CD8-positive, alpha-beta memory T cell (primary cell): ENCODE measurements at regions of chr4 and their contacts with region 1.

Region 1: GRCh38 chr4:77203380-77204197 is 46.6 kb downstream of the CCNG2 start:
- DNase-seq: peak; percentile 43 to 74 (median 55)
- H3K4me3 ChIP-seq: no peak overlapping the region
- H3K4me3 Mint-ChIP-seq: no peak overlapping the region
- H3K27ac ChIP-seq: no peak overlapping the region
- H3K27ac Mint-ChIP-seq: no peak overlapping the region
- H3K4me1 ChIP-seq: no peaks in the 10 kb centered on the region
- H3K4me1 Mint-ChIP-seq: peaks cover 0 to 7% (median 0%) of the 10 kb centered on the region in 3 donors
- H3K27me3 ChIP-seq: no peaks in the 10 kb centered on the region
- H3K27me3 Mint-ChIP-seq: peaks cover 2 to 9% of the 10 kb centered on the region in 2 donors

Region 2: GRCh38 chr4:77044461-77045150 is 159.0 kb before region 1 on chr4:
- CTCF ChIA-PET with region 1: interaction called, 43 read pairs
- POLR2A ChIA-PET with region 1: interaction called, 3 read pairs
- DNase-seq: peak in 1 of 5 donors; percentile 23
- H3K4me3 ChIP-seq: no peak overlapping the region
- H3K4me3 Mint-ChIP-seq: no peak overlapping the region
- H3K27ac ChIP-seq: no peak overlapping the region
- H3K27ac Mint-ChIP-seq: peak overlapping the region in 5 of 8 donors; percentile 10 to 82 (median 58)
- H3K4me1 ChIP-seq: peaks cover 4% of the 10 kb centered on the region
- H3K4me1 Mint-ChIP-seq: peaks cover 6 to 12% (median 10%) of the 10 kb centered on the region in 3 donors
- H3K27me3 ChIP-seq: no peaks in the 10 kb centered on the region
- H3K27me3 Mint-ChIP-seq: no peaks in the 10 kb centered on the region

Region 3: GRCh38 chr4:77052352-77052751 is 151.2 kb before region 1 on chr4:
- CTCF ChIA-PET with region 1: interaction called, 43 read pairs
- POLR2A ChIA-PET with region 1: no interaction called
- DNase-seq: peak; percentile 34 to 75 (median 51)
- H3K4me3 ChIP-seq: no peak overlapping the region
- H3K4me3 Mint-ChIP-seq: no peak overlapping the region
- H3K27ac ChIP-seq: no peak overlapping the region
- H3K27ac Mint-ChIP-seq: peak overlapping the region in 7 of 8 donors; percentile 1 to 81 (median 50)
- H3K4me1 ChIP-seq: no peaks in the 10 kb centered on the region
- H3K4me1 Mint-ChIP-seq: peaks cover 12 to 16% (median 16%) of the 10 kb centered on the region in 3 donors
- H3K27me3 ChIP-seq: no peaks in the 10 kb centered on the region
- H3K27me3 Mint-ChIP-seq: no peaks in the 10 kb centered on the region

Region 4: GRCh38 chr4:77075869-77076799 is 127.5 kb before region 1 on chr4 and contains the start of gene CCNI:
- CTCF ChIA-PET with region 1: interaction called, 15 read pairs
- POLR2A ChIA-PET with region 1: no interaction called
- DNase-seq: peak; percentile 88 to 96 (median 96)
- H3K4me3 ChIP-seq: peak within 1 kb of the TSS; percentile 97
- H3K4me3 Mint-ChIP-seq: peak within 1 kb of the TSS in 2 of 7 donors; percentile 96 to 100
- H3K27ac ChIP-seq: peak within 1 kb of the TSS; percentile 100
- H3K27ac Mint-ChIP-seq: peak within 1 kb of the TSS in 6 of 8 donors; percentile 100
- H3K4me1 ChIP-seq: peaks cover 48% of the 10 kb centered on the region
- H3K4me1 Mint-ChIP-seq: peaks cover 32 to 47% (median 45%) of the 10 kb centered on the region in 3 donors
- H3K27me3 ChIP-seq: no peaks in the 10 kb centered on the region
- H3K27me3 Mint-ChIP-seq: peaks cover 0 to 11% of the 10 kb centered on the region in 2 donors
- total RNA-seq, gene CCNI: 191 to 206 TPM

Region 5: GRCh38 chr4:77089866-77090265 is 113.7 kb before region 1 on chr4:
- CTCF ChIA-PET with region 1: interaction called, 144 read pairs
- POLR2A ChIA-PET with region 1: no interaction called
- DNase-seq: no peak
- H3K4me3 ChIP-seq: no peak overlapping the region
- H3K4me3 Mint-ChIP-seq: no peak overlapping the region
- H3K27ac ChIP-seq: no peak overlapping the region
- H3K27ac Mint-ChIP-seq: no peak overlapping the region
- H3K4me1 ChIP-seq: no peaks in the 10 kb centered on the region
- H3K4me1 Mint-ChIP-seq: no peaks in the 10 kb centered on the region
- H3K27me3 ChIP-seq: no peaks in the 10 kb centered on the region
- H3K27me3 Mint-ChIP-seq: no peaks in the 10 kb centered on the region

Region 6: GRCh38 chr4:77095101-77095821 is 108.3 kb before region 1 on chr4:
- CTCF ChIA-PET with region 1: interaction called, 144 read pairs
- POLR2A ChIA-PET with region 1: no interaction called
- DNase-seq: peak; percentile 33 to 78 (median 56)
- H3K4me3 ChIP-seq: no peak overlapping the region
- H3K4me3 Mint-ChIP-seq: no peak overlapping the region
- H3K27ac ChIP-seq: no peak overlapping the region
- H3K27ac Mint-ChIP-seq: peak overlapping the region in 1 of 8 donors; percentile 7
- H3K4me1 ChIP-seq: peaks cover 2% of the 10 kb centered on the region
- H3K4me1 Mint-ChIP-seq: peaks cover 7 to 11% (median 9%) of the 10 kb centered on the region in 3 donors
- H3K27me3 ChIP-seq: no peaks in the 10 kb centered on the region
- H3K27me3 Mint-ChIP-seq: no peaks in the 10 kb centered on the region